Head of caudate nucleus (tissue), 42 donors: ENCODE measurements at regions of chr15 and their contacts with region 1.

Region 1: DNA sequence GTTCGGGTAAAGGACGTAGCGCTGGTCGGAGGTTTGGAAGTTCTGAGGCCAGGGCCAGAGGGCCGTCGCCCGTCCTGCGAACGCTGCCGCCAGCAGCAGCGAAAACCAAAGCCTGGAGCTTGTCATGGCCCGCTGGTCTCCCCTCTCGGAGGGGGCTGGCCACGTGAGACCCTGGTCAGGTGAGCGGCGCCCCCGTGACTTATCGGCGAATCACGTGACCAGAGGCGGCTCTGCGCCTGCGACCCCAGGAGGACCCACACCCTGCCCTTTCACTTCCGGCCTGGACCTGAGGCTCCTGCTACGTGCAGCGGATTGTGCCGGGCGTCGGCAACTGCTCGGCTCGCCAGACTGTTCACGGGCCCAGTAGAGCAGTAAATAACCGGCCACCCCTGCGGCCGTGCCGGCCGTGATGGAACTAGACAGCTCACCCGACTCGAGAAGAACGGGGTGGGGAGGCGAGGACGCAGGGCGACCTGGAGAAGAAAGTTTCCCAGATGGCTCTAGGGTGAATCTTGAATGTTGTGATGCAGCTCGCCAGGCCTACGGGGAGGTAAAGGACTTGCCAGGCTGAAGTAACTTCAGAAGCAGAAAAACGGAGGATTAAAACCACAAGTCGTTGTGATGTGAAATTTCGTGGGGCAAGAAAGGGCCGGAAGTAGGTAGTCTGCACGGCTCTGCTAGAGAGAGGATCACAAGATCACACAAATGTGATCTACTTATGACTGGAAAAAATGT is at the start of gene HEXA:
- DNase-seq: peak; percentile 85 to 98 (median 95)

Region 2: DNA sequence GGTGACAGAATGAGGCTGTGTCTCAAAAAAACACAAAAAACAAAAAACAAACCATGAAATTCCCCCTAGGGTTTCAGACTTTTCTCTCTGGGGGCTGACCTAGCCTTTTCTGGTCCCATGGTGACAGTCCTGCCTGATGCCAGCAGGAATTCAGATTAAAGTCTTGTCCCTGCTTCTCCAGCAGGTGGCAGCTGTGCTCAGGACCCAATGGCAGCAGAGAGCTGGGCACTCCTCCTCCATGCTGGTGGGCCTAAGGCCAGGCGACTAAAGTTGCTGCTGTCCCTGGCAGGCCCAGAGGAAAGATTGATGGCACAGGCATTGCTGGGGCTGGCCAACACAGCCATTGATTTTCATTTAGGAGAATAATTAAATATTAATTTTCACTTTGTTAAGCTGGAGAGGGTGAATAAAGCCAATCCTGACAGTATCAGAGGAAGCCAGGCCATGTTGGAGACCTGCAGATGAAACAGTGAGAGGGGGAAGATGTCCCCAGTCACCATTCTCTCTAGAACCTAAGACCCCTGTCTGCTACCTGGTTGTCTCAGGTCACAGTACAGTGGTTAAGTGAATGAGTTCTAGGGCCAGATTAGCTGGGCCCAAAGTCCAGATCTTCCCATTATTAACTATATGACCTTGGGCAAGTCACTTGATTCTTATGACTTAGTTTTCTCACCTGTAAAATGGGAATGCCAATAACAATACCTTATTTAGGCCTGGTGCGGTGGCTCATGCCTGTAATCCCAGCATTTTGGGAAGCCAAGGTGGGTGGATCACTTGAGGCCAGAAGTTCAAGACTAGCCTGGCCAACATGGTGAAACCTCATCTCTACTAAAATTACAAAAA is 63.2 kb before region 1 on chr15:
- intact Hi-C with region 1: loop called (anchors 10 kb)
- DNase-seq: peak; percentile 35 to 81 (median 62)

Region 3: GRCh38 chr15:72445426-72445825 is 69.4 kb after region 1 on chr15:
- intact Hi-C with region 1: no loop called
- DNase-seq: no peak